ENCODE measurements at regions of chr2 and their contacts with region 1.

Region 1: GRCh38 chr2:96638144-96639121 is at the start of gene KANSL3:
- DNase-seq: peak; percentile 93
- ATAC-seq: peak; percentile 93
- H3K4me3 ChIP-seq: peak within 1 kb of the TSS; percentile 87
- H3K27ac ChIP-seq: peak within 1 kb of the TSS; percentile 84
- H3K4me1 ChIP-seq: peaks cover 13% of the 10 kb centered on the region
- H3K27me3 ChIP-seq: no peaks in the 10 kb centered on the region
- CTCF ChIP-seq: no peak
- POLR2A ChIP-seq: peak; percentile 95
- RAD21 ChIP-seq: peak; percentile 29
- total RNA-seq, gene KANSL3: 25.0 and 26.3 TPM in 2 replicates

Region 2: GRCh38 chr2:96656540-96656939 is 18.1 kb after region 1 on chr2:
- CTCF ChIA-PET with region 1: no interaction called
- POLR2A ChIA-PET with region 1: interaction called, 3 read pairs
- dilution Hi-C with region 1: no loop called
- in situ Hi-C with region 1: no loop called
- intact Hi-C with region 1: loop called (anchors 2 kb)
- DNase-seq: no peak
- ATAC-seq: no peak
- H3K4me3 ChIP-seq: no peak overlapping the region
- H3K27ac ChIP-seq: no peak overlapping the region
- H3K4me1 ChIP-seq: no peaks in the 10 kb centered on the region
- H3K27me3 ChIP-seq: no peaks in the 10 kb centered on the region
- CTCF ChIP-seq: no peak
- POLR2A ChIP-seq: no peak
- RAD21 ChIP-seq: no peak

Region 3: GRCh38 chr2:96816128-96816835 is 177.8 kb after region 1 on chr2 and contains the start of gene CNNM3:
- CTCF ChIA-PET with region 1: no interaction called
- POLR2A ChIA-PET with region 1: no interaction called
- dilution Hi-C with region 1: no loop called
- in situ Hi-C with region 1: no loop called
- intact Hi-C with region 1: no loop called
- DNase-seq: peak; percentile 88
- ATAC-seq: peak; percentile 96
- H3K4me3 ChIP-seq: peak within 1 kb of the TSS; percentile 69
- H3K27ac ChIP-seq: peak within 1 kb of the TSS; percentile 60
- H3K4me1 ChIP-seq: peaks cover 12% of the 10 kb centered on the region
- H3K27me3 ChIP-seq: no peaks in the 10 kb centered on the region
- CTCF ChIP-seq: peak; percentile 59
- POLR2A ChIP-seq: no peak
- RAD21 ChIP-seq: peak; percentile 31
- total RNA-seq, gene CNNM3: 2.2 and 2.3 TPM in 2 replicates

Measured in IMR-90 (cell line).